Endothelial cell of umbilical vein (primary cell): ENCODE measurements at regions of chr10 and their contacts with region 1.

Region 1: DNA sequence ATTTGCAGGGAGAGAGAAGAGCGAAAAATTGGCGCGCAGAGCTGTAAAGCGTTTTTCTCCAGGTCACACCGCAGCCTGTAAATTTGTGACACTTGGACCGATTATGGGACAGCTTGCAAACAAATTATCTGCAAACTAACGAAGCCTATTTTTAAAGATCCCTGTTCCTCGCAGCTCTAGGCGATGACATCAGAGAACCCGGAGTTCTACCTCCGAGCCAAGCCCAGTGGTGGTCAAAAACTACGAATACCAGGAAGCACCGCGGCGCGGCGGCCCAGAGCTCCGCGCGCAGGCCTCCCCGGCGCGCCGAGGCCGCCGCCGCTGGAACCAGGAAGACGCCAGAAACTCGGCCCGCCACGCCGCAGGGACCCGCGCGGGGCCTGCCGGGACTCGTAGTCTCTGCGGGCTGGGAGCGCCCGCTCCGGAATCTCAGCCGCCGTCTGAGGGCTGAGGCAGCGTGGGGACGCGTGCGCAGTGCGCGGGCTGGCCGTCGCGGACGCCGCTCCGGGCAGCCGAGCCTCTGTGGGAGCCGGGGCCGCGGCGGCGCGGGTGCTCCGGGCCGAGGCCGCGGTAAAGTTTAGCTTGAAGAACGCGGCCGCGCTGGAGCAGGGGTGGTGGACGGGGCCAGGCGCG is at the start of gene PLEKHA1:
- DNase-seq: peak; percentile 96
- H3K4me3 ChIP-seq: peak within 1 kb of the TSS; percentile 85 to 93 (median 89)
- H3K27ac ChIP-seq: peak within 1 kb of the TSS; percentile 84
- H3K4me1 ChIP-seq: peaks cover 15% of the 10 kb centered on the region
- H3K27me3 ChIP-seq: no peaks in the 10 kb centered on the region
- CTCF ChIP-seq: no peak
- POLR2A ChIP-seq: peak; percentile 56
- total RNA-seq, gene PLEKHA1: 58.0 and 58.8 TPM in 2 replicates

Region 2: DNA sequence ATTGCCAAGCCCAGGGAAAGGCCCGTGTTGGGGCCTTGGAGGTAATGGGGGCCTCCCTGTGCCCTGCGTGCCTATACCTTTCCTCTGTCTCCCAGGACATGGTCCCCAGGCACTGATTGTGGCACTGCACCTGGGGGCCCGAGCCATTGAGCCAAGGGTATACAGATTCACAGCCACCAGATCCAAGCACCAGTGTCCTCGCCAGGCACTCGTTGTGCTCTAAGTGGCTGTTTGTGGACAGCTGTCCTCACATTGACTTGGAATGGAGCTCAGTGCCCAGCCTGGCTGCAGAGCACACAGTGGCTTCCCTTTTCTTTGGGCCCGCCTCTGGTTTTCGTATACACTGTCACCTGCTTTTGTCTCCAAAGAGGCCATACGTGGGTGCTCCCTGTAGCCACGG is 175.3 kb before region 1 on chr10:
- CTCF ChIA-PET with region 1: no interaction called
- POLR2A ChIA-PET with region 1: no interaction called
- dilution Hi-C with region 1: no loop called
- intact Hi-C with region 1: no loop called
- DNase-seq: no peak
- H3K4me3 ChIP-seq: no peak overlapping the region
- H3K27ac ChIP-seq: no peak overlapping the region
- H3K4me1 ChIP-seq: peaks cover 7% of the 10 kb centered on the region
- H3K27me3 ChIP-seq: no peaks in the 10 kb centered on the region
- CTCF ChIP-seq: no peak
- POLR2A ChIP-seq: no peak

Region 3: DNA sequence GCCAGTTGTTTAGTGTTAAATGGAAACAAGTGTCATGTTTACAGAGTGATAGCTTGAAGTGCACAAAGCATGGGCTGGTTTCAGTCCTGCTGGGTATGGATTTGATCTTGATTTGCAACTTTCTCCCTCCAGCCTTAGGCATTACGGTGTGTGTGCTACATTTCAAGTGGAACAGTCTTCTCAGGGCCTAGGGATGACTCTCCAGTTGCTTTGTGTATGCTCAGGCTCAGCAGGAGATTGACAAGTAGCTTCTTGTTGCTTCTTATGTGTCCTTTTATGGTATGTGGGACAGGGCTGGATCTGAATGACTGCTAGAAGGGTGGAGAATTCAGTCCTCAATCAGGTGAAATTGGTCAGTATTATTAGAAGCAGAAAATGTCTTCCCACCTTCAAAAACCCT is 51.2 kb before region 1 on chr10:
- CTCF ChIA-PET with region 1: no interaction called
- POLR2A ChIA-PET with region 1: no interaction called
- dilution Hi-C with region 1: no loop called
- intact Hi-C with region 1: no loop called
- DNase-seq: no peak
- H3K4me3 ChIP-seq: no peak overlapping the region
- H3K27ac ChIP-seq: no peak overlapping the region
- H3K4me1 ChIP-seq: no peaks in the 10 kb centered on the region
- H3K27me3 ChIP-seq: no peaks in the 10 kb centered on the region
- CTCF ChIP-seq: no peak
- POLR2A ChIP-seq: no peak

Region 4: DNA sequence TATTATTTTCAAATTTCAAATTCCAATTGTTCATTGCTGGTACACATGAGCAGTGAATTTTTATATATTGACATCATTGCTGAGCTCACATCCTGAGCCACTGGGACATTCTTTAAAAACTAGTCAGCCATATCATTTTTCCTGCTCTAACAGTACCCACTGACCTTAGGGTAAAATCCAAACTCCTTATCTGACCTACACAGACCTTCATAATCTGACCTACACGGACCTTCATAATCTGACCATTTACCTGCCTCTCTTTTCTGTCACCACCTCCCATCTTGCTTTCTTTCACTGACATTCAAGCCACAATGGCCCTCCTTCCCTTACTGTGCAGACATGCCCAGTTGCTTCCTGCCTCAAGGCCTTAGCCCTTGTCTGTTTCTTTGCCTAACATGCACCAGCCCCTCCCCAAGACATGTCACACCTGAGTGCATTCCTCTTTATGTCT is 487.4 kb after region 1 on chr10:
- CTCF ChIA-PET with region 1: no interaction called
- POLR2A ChIA-PET with region 1: no interaction called
- dilution Hi-C with region 1: no loop called
- intact Hi-C with region 1: loop called (anchors 10 kb)
- DNase-seq: peak; percentile 78
- H3K4me3 ChIP-seq: no peak overlapping the region
- H3K27ac ChIP-seq: peak overlapping the region; percentile 94
- H3K4me1 ChIP-seq: peaks cover 40% of the 10 kb centered on the region
- H3K27me3 ChIP-seq: no peaks in the 10 kb centered on the region
- CTCF ChIP-seq: no peak
- POLR2A ChIP-seq: peak; percentile 56